Activated CD8-positive, alpha-beta T cell treated with anti-CD3 and anti-CD28 coated beads, Interleukin-2, amount 10 ng/mL, durations not matched to agents 7 days and 5 days (primary cell): ENCODE measurements at regions of chr7 and their contacts with region 1.

Region 1: GRCh38 chr7:143240291-143241168 is 18.7 kb downstream of the TAS2R40 start:
- DNase-seq: peak; percentile 83
- ATAC-seq: peak; percentile 85
- H3K4me3 Mint-ChIP-seq: no peak overlapping the region
- H3K27ac Mint-ChIP-seq: peak overlapping the region; percentile 51
- H3K4me1 Mint-ChIP-seq: peaks cover 37% of the 10 kb centered on the region
- H3K27me3 Mint-ChIP-seq: peaks cover 11% of the 10 kb centered on the region

Region 2: GRCh38 chr7:143172354-143172753 is 68.2 kb before region 1 on chr7:
- CTCF ChIA-PET with region 1: no interaction called
- POLR2A ChIA-PET with region 1: no interaction called
- DNase-seq: no peak
- ATAC-seq: no peak
- H3K4me3 Mint-ChIP-seq: no peak overlapping the region
- H3K27ac Mint-ChIP-seq: no peak overlapping the region
- H3K4me1 Mint-ChIP-seq: no peaks in the 10 kb centered on the region
- H3K27me3 Mint-ChIP-seq: peaks cover 4% of the 10 kb centered on the region

Region 3: DNA sequence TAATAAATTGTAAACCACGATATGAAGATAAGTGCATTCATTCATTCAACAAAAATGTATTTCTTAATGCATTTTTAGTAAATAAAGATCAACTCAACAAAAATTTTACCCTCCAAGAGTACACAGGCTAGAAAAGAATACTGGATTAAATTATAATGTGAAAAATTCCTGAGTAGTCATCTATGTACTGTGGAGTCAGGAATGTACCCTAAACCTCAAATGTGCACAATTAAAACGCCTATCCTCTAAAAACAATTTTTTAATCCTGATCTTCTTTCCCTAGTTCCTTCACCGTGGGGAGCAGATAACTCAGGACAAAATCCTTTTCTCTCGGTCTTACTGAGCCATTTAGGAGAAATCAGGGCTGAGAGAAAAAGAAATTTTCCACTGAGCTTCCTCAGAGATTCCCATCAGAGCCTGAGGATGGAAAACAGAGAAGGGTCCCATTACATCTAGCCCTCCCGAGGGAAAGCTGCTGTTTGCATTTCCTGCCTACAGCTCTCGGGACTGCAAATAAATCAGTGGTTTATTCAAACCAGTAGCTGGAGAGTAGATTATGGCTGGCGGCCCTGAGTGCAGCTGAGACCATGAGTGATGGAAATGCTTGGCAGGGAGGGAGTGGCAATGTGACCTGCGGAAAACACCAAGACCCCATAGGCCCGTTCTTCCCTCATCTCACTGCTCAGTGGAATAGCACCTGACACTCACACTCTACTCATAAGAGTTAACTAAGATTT is 11.3 kb before region 1 on chr7:
- CTCF ChIA-PET with region 1: interaction called, 16 read pairs
- POLR2A ChIA-PET with region 1: no interaction called
- DNase-seq: no peak
- ATAC-seq: no peak
- H3K4me3 Mint-ChIP-seq: no peak overlapping the region
- H3K27ac Mint-ChIP-seq: no peak overlapping the region
- H3K4me1 Mint-ChIP-seq: no peaks in the 10 kb centered on the region
- H3K27me3 Mint-ChIP-seq: peaks cover 17% of the 10 kb centered on the region

Region 4: DNA sequence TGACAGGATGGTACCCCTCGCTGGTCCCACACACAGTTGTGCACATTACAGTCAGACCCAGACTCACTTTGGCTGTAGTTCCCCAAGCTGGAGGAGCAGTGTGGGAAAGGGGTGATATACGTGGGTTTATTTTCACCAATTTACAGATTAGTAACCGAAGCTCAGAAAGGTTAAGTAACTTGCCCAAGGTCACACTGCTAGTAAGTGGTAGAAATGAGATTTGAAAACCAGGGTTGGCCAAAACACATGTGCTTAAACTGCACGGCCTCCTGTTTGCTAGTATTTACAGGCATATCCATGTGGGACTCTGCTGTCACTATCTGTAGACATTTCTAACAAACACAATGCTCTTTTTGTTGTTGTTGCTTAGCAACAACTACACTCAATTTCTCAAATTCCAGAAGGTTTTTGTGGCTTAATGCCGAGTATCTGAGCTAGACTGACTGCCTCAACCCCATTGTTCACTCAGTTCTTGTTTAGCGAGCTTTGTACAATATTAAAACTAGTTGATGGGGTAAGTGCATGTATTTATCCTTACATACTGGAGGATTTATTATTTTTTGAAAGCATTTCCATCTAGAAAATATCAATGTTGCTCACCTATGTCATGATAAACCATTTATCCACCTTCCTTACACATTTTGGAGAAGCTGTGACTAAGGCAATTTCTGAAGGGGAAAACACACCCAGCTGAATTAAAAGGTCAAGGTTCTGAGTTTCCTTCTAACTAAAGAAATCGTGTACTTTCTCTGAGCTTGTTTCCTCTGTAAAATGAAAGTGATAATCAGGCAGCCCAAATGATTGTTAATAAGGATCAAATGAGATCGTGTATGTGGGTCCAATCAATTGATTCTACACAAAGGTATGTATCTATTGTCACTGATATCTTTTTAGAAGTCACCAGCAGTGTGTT is 38.9 kb after region 1 on chr7:
- CTCF ChIA-PET with region 1: interaction called, 31 read pairs
- POLR2A ChIA-PET with region 1: no interaction called
- DNase-seq: no peak
- ATAC-seq: peak; percentile 78
- H3K4me3 Mint-ChIP-seq: peak overlapping the region; percentile 61
- H3K27ac Mint-ChIP-seq: peak overlapping the region; percentile 75
- H3K4me1 Mint-ChIP-seq: peaks cover 42% of the 10 kb centered on the region
- H3K27me3 Mint-ChIP-seq: no peaks in the 10 kb centered on the region

Region 5: GRCh38 chr7:143305423-143306070 is 65.0 kb after region 1 on chr7:
- CTCF ChIA-PET with region 1: interaction called, 274 read pairs
- POLR2A ChIA-PET with region 1: interaction called, 4 read pairs
- DNase-seq: peak; percentile 72
- ATAC-seq: peak; percentile 57
- H3K4me3 Mint-ChIP-seq: no peak overlapping the region
- H3K27ac Mint-ChIP-seq: peak overlapping the region; percentile 9
- H3K4me1 Mint-ChIP-seq: peaks cover 51% of the 10 kb centered on the region
- H3K27me3 Mint-ChIP-seq: no peaks in the 10 kb centered on the region

Region 6: GRCh38 chr7:143372070-143372469 is 131.5 kb after region 1 on chr7:
- CTCF ChIA-PET with region 1: interaction called, 26 read pairs
- POLR2A ChIA-PET with region 1: no interaction called
- DNase-seq: peak; percentile 60
- ATAC-seq: peak; percentile 28
- H3K4me3 Mint-ChIP-seq: no peak overlapping the region
- H3K27ac Mint-ChIP-seq: peak overlapping the region; percentile 75
- H3K4me1 Mint-ChIP-seq: peaks cover 54% of the 10 kb centered on the region
- H3K27me3 Mint-ChIP-seq: no peaks in the 10 kb centered on the region

Region 7: DNA sequence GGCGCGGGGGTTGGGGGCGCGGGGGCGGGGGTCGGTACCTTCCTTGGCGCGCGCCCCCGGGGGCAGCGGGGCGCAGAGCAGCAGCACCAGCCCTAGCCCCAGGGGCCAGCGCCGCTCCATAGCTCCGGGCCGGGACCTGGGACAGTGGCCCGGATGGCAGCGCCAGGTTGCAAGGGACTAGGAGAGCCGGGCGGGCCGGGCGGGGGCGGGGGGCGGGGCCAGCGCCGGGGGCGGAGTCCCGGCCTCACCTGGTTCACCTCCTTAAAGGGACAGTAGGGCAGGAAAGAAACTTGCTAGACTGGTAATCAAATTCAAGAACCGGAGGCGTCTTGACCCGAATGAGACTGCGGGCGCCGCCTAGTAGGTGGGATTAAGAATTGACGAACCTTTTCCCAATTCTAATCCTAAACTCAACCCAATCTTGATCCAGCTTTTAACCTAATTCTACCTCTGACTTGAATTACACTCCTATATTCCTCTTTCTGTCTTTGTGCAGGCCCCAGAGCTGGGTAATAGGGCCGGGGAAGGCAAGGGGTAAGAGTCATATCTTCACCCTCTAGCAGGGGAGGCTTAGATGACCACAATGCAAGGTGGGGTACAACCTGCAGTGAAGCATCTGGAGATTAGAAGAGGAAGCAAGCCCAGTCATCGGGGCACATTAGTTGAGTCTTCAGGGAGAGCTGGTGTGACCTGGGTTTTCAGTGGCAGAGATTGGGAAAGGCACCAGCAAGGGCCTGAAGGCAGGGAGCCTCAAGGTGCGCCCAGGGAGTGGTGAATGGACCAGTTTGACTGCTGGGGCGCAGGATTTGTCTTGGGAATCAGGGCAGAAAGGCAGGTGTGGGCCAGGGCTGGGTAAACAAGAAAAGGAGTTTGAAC is 168.4 kb after region 1 on chr7 and contains the start of gene EPHA1:
- CTCF ChIA-PET with region 1: interaction called, 38 read pairs
- POLR2A ChIA-PET with region 1: no interaction called
- DNase-seq: peak; percentile 59
- ATAC-seq: peak; percentile 75
- H3K4me3 Mint-ChIP-seq: peak within 1 kb of the TSS; percentile 79
- H3K27ac Mint-ChIP-seq: peak within 1 kb of the TSS; percentile 79
- H3K4me1 Mint-ChIP-seq: peaks cover 53% of the 10 kb centered on the region
- H3K27me3 Mint-ChIP-seq: peaks cover 2% of the 10 kb centered on the region
- total RNA-seq, gene EPHA1: 12.4 to 15.7 TPM